Heart right ventricle (tissue), 16 donors: ENCODE measurements at regions of chr12 and their contacts with region 1.

Region 1: GRCh38 chr12:46963977-46964971 is 115.1 kb upstream of the PCED1B start:
- DNase-seq: peak in 1 of 2 donors; percentile 29
- ATAC-seq: peak; percentile 61 to 82 (median 70)
- H3K4me3 ChIP-seq: no peak overlapping the region
- H3K27ac ChIP-seq: peak overlapping the region; percentile 63 to 89 (median 74)
- H3K4me1 ChIP-seq: peaks cover 0 to 38% (median 27%) of the 10 kb centered on the region in 9 donors
- H3K27me3 ChIP-seq: no peaks in the 10 kb centered on the region
- CTCF ChIP-seq: no peak

Region 2: DNA sequence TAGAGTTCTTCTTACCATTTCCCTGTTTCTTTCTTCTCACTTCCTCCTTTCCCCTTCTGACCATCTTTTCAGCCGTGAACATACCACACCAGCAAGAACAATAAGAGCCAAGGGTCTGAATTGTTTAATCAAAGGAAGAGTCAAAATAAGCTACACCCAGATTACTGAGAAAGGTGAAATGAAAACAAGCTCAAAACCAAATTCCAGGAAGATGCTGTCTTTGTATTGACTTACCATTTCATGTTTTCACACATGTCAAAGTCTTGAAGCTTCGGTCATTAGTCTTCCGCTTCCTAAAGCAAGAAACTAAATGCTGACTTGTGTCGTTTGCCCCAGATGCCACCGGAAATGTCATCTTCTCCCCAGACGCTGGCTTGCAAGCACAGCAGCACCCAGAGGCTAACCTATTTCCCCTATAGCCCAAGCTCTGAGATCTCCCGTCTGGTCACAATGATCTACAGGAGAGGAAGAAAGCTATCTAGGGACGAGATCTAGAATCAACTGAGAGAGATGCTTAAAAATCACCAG is 251.9 kb after region 1 on chr12:
- intact Hi-C with region 1: no loop called
- DNase-seq: no peak
- ATAC-seq: peak in 7 of 8 donors; percentile 63 to 85 (median 76)
- H3K4me3 ChIP-seq: peak overlapping the region in 6 of 10 donors; percentile 7 to 55 (median 14)
- H3K27ac ChIP-seq: peak overlapping the region in 3 of 10 donors; percentile 42 to 88 (median 44)
- H3K4me1 ChIP-seq: peaks cover 0 to 14% (median 0%) of the 10 kb centered on the region in 9 donors
- H3K27me3 ChIP-seq: no peaks in the 10 kb centered on the region
- CTCF ChIP-seq: no peak

Region 3: GRCh38 chr12:47758834-47759690 is 794.8 kb after region 1 on chr12 and contains the start of gene RAPGEF3:
- intact Hi-C with region 1: loop called in 1 of 10 experiments (anchors 10 kb)
- DNase-seq: peak; percentile 89
- ATAC-seq: peak; percentile 87 to 92 (median 88)
- H3K4me3 ChIP-seq: peak within 1 kb of the TSS; percentile 34 to 78 (median 59)
- H3K27ac ChIP-seq: peak within 1 kb of the TSS; percentile 72 to 91 (median 86)
- H3K4me1 ChIP-seq: peaks cover 16 to 78% (median 58%) of the 10 kb centered on the region in 9 donors
- H3K27me3 ChIP-seq: no peaks in the 10 kb centered on the region
- CTCF ChIP-seq: peak; percentile 28 to 65 (median 50)
- total RNA-seq, gene RAPGEF3: 9.5 to 54.9 (median 19.8) TPM